Heart left ventricle (tissue), 16 donors: ENCODE measurements at regions of chr2 and their contacts with region 1.

Region 1: GRCh38 chr2:128354726-128355470 is 36.2 kb upstream of the HS6ST1 start:
- DNase-seq: no peak
- ATAC-seq: no peak
- H3K4me3 ChIP-seq: no peak overlapping the region
- H3K27ac ChIP-seq: no peak overlapping the region
- H3K4me1 ChIP-seq: no peaks in the 10 kb centered on the region
- H3K27me3 ChIP-seq: no peaks in the 10 kb centered on the region
- CTCF ChIP-seq: no peak
- POLR2A ChIP-seq: no peak

Region 2: GRCh38 chr2:128442053-128442751 is 87.3 kb after region 1 on chr2:
- intact Hi-C with region 1: loop called in 1 of 10 experiments (anchors 10 kb)
- DNase-seq: no peak
- ATAC-seq: no peak
- H3K4me3 ChIP-seq: no peak overlapping the region
- H3K27ac ChIP-seq: peak overlapping the region in 7 of 12 donors; percentile 17 to 86 (median 47)
- H3K4me1 ChIP-seq: peaks cover 0 to 46% (median 16%) of the 10 kb centered on the region in 12 donors
- H3K27me3 ChIP-seq: no peaks in the 10 kb centered on the region
- CTCF ChIP-seq: no peak
- POLR2A ChIP-seq: no peak